Activated B cell treated with CpG ODN at 0.5 μM for 24 hours (primary cell): ENCODE measurements at regions of chr12 and their contacts with region 1.

Region 1: DNA sequence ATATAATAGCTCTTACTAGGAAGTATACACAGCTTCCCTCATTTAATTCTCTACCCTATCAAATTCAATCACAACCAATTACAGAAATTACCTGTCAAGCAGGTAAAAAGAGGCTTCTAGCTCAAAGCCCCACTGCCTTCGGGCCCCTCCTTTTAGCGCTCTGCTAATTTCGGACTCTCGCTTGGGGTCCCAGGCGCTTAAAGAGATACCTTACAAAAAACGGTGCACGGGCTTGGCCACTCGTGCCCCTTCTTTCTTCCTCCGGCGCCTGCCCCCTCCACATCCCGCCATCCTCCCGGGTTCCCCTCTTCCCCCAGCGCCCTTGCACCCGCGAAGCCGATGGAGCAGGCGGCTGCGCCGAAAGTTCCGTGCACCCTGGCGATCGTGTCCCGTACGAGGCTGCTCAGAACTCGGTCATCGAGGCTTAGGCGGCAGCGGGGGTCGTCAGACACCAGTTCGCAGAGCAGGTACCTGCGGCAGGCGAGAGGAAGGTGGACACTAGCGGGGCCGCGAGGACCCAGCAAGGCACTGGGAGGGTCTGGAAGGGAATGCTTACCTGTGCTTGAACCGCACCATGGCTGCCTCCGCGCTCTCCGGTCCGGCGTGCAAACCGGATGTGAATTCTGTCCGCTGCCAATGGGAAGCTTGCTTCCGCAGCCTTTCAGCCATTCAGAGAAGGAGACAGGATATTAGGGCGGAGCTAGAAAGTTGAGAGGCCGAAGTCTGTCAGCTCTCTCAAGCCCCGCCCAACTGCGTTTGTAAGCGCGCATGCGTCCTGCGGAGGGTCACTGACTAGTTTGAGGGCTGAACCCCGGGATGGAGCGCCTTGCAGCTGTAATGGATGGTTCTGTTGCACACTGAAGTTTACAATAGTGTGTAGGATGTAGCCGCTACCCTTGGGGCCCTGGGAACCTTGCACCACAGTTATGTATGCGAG is at the start of gene POP5:
- DNase-seq: peak; percentile 84
- ATAC-seq: peak; percentile 97
- H3K4me3 Mint-ChIP-seq: peak within 1 kb of the TSS; percentile 98
- H3K27ac Mint-ChIP-seq: peak within 1 kb of the TSS; percentile 86
- H3K4me1 Mint-ChIP-seq: peaks cover 38% of the 10 kb centered on the region
- H3K27me3 Mint-ChIP-seq: peaks cover 10% of the 10 kb centered on the region
- CTCF ChIP-seq: no peak
- total RNA-seq, gene POP5: 77.5 and 78.4 TPM in 2 replicates

Region 2: DNA sequence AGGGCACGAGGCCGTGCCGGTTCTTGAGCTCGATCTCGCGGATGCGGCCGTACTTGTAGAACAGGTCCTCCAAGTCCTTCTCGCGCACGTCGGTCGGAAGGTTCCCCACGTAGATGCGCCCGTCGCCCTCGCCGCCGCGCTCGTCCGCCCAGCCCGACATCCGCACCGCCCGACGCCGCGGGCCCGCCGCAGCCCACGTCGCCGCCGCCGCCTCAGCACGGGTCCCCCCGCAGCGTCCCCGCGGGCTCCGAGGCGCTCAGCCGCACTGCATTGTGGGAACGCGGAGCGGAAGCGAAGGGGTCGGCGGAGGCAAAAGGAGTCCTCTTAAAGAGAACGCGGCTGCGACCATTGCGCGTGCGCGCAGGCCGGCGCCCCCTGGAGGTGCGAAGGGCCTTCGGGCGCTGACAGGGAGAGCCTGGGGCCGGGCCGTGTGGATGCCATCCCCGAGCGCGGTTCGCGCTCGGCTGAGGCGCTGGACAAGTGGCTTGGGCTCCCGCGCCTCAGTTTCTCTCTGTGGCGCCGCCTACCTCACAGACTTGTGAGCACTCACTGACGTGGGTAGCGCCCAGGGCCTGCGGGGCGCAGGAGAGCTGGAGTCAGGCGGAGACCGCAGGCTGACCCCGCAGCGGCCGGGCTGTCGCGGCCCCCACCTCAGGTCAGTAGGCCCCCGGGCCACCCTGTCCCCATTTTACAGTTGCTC is 111.5 kb before region 1 on chr12 and contains the start of gene SRSF9:
- CTCF ChIA-PET with region 1: no interaction called
- POLR2A ChIA-PET with region 1: interaction called, 8 read pairs
- intact Hi-C with region 1: loop called (anchors 1 kb)
- DNase-seq: peak; percentile 99
- ATAC-seq: peak; percentile 88
- H3K4me3 Mint-ChIP-seq: peak within 1 kb of the TSS; percentile 90
- H3K27ac Mint-ChIP-seq: peak within 1 kb of the TSS; percentile 86
- H3K4me1 Mint-ChIP-seq: peaks cover 33% of the 10 kb centered on the region
- H3K27me3 Mint-ChIP-seq: no peaks in the 10 kb centered on the region
- CTCF ChIP-seq: no peak
- total RNA-seq, gene SRSF9: 191 and 192 TPM in 2 replicates

Region 3: GRCh38 chr12:120649442-120650232 is 68.6 kb after region 1 on chr12:
- CTCF ChIA-PET with region 1: interaction called, 31 read pairs
- POLR2A ChIA-PET with region 1: interaction called, 6 read pairs
- intact Hi-C with region 1: loop called (anchors 1 kb)
- DNase-seq: no peak
- ATAC-seq: no peak
- H3K4me3 Mint-ChIP-seq: peak overlapping the region; percentile 75
- H3K27ac Mint-ChIP-seq: peak overlapping the region; percentile 44
- H3K4me1 Mint-ChIP-seq: peaks cover 26% of the 10 kb centered on the region
- H3K27me3 Mint-ChIP-seq: peaks cover 48% of the 10 kb centered on the region
- CTCF ChIP-seq: peak; percentile 50

Region 4: GRCh38 chr12:120849765-120850164 is 268.7 kb after region 1 on chr12:
- CTCF ChIA-PET with region 1: no interaction called
- POLR2A ChIA-PET with region 1: no interaction called
- intact Hi-C with region 1: loop called (anchors 5 kb)
- DNase-seq: no peak
- ATAC-seq: no peak
- H3K4me3 Mint-ChIP-seq: peak overlapping the region; percentile 52
- H3K27ac Mint-ChIP-seq: peak overlapping the region; percentile 77
- H3K4me1 Mint-ChIP-seq: peaks cover 73% of the 10 kb centered on the region
- H3K27me3 Mint-ChIP-seq: no peaks in the 10 kb centered on the region
- CTCF ChIP-seq: no peak

Region 5: GRCh38 chr12:121095544-121096198 is 514.6 kb after region 1 on chr12:
- CTCF ChIA-PET with region 1: interaction called, 8 read pairs
- POLR2A ChIA-PET with region 1: no interaction called
- intact Hi-C with region 1: loop called (anchors 1 kb)
- DNase-seq: peak; percentile 72
- ATAC-seq: peak; percentile 96
- H3K4me3 Mint-ChIP-seq: peak overlapping the region; percentile 83
- H3K27ac Mint-ChIP-seq: no peak overlapping the region
- H3K4me1 Mint-ChIP-seq: peaks cover 29% of the 10 kb centered on the region
- H3K27me3 Mint-ChIP-seq: peaks cover 8% of the 10 kb centered on the region
- CTCF ChIP-seq: peak; percentile 39

Region 6: GRCh38 chr12:121399391-121400331 is 818.6 kb after region 1 on chr12 and contains the start of gene RNF34:
- CTCF ChIA-PET with region 1: no interaction called
- POLR2A ChIA-PET with region 1: interaction called, 4 read pairs
- intact Hi-C with region 1: loop called (anchors 2 kb)
- DNase-seq: peak; percentile 93
- ATAC-seq: peak; percentile 91
- H3K4me3 Mint-ChIP-seq: peak within 1 kb of the TSS; percentile 96
- H3K27ac Mint-ChIP-seq: peak within 1 kb of the TSS; percentile 95
- H3K4me1 Mint-ChIP-seq: peaks cover 37% of the 10 kb centered on the region
- H3K27me3 Mint-ChIP-seq: no peaks in the 10 kb centered on the region
- CTCF ChIP-seq: no peak
- total RNA-seq, gene RNF34: 71.2 and 75.3 TPM in 2 replicates